CD4-positive, alpha-beta memory T cell (primary cell): ENCODE measurements at regions of chr22 and their contacts with region 1.

Region 1: DNA sequence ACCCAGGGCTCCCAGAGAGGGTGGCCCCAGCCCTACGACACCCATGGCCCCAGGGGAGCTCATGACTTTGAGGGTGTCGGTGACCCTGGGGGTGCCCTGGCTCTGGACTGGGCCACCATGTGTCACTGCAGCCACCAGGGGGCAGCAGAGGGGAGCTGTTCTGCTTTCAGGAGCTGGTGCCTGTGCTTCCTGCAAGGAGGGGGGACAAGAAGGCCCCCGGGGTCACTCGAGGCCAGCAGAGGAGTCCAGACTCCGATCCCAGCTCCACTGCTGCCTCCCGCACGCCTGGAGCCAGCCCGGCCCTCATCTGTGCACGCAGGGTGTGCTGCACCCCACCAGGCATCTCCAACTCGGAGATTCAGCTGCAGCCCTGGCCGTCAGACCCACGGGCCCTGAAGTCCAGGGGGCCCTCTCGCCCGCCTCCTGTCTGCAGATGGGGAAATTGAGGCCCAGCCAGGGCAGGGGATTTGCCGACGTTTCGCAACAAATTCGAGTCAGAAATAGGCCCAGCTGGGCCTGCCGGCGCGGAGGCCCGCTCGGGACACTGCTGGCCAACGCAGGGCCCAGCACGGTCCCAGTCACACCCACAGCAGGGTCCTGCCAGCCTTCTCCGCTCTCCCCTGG is 29.5 kb upstream of the WNT7B start:
- DNase-seq: peak; percentile 77 to 82 (median 81)
- H3K4me3 ChIP-seq: no peak overlapping the region
- H3K4me3 Mint-ChIP-seq: peak overlapping the region in 1 of 8 donors; percentile 43
- H3K27ac ChIP-seq: no peak overlapping the region
- H3K27ac Mint-ChIP-seq: peak overlapping the region in 3 of 7 donors; percentile 8 to 68 (median 22)
- H3K4me1 ChIP-seq: no peaks in the 10 kb centered on the region
- H3K4me1 Mint-ChIP-seq: peaks cover 0 to 5% (median 3%) of the 10 kb centered on the region in 4 donors
- H3K27me3 ChIP-seq: no peaks in the 10 kb centered on the region
- H3K27me3 Mint-ChIP-seq: no peaks in the 10 kb centered on the region

Region 2: GRCh38 chr22:45994491-45995404 is 11.7 kb before region 1 on chr22:
- CTCF ChIA-PET with region 1: interaction called, 52 read pairs
- POLR2A ChIA-PET with region 1: no interaction called
- intact Hi-C with region 1: no loop called
- DNase-seq: peak; percentile 56 to 71 (median 61)
- H3K4me3 ChIP-seq: no peak overlapping the region
- H3K4me3 Mint-ChIP-seq: no peak overlapping the region
- H3K27ac ChIP-seq: no peak overlapping the region
- H3K27ac Mint-ChIP-seq: no peak overlapping the region
- H3K4me1 ChIP-seq: peaks cover 5% of the 10 kb centered on the region
- H3K4me1 Mint-ChIP-seq: peaks cover 0 to 11% (median 5%) of the 10 kb centered on the region in 4 donors
- H3K27me3 ChIP-seq: no peaks in the 10 kb centered on the region
- H3K27me3 Mint-ChIP-seq: peaks cover 1 to 6% of the 10 kb centered on the region in 2 donors

Region 3: GRCh38 chr22:46019351-46019750 is 12.9 kb after region 1 on chr22:
- CTCF ChIA-PET with region 1: interaction called, 46 read pairs
- POLR2A ChIA-PET with region 1: no interaction called
- intact Hi-C with region 1: no loop called
- DNase-seq: no peak
- H3K4me3 ChIP-seq: no peak overlapping the region
- H3K4me3 Mint-ChIP-seq: no peak overlapping the region
- H3K27ac ChIP-seq: no peak overlapping the region
- H3K27ac Mint-ChIP-seq: no peak overlapping the region
- H3K4me1 ChIP-seq: peaks cover 4% of the 10 kb centered on the region
- H3K4me1 Mint-ChIP-seq: peaks cover 0 to 5% (median 1%) of the 10 kb centered on the region in 4 donors
- H3K27me3 ChIP-seq: no peaks in the 10 kb centered on the region
- H3K27me3 Mint-ChIP-seq: peaks cover 4 to 5% of the 10 kb centered on the region in 2 donors

Region 4: GRCh38 chr22:46116491-46116958 is 110.0 kb after region 1 on chr22:
- CTCF ChIA-PET with region 1: interaction called, 236 read pairs
- POLR2A ChIA-PET with region 1: interaction called, 13 read pairs
- intact Hi-C with region 1: loop called (anchors 1 kb)
- DNase-seq: peak; percentile 74 to 83 (median 77)
- H3K4me3 ChIP-seq: no peak overlapping the region
- H3K4me3 Mint-ChIP-seq: no peak overlapping the region
- H3K27ac ChIP-seq: no peak overlapping the region
- H3K27ac Mint-ChIP-seq: peak overlapping the region in 1 of 7 donors; percentile 29
- H3K4me1 ChIP-seq: peaks cover 4% of the 10 kb centered on the region
- H3K4me1 Mint-ChIP-seq: peaks cover 0 to 1% (median 0%) of the 10 kb centered on the region in 4 donors
- H3K27me3 ChIP-seq: no peaks in the 10 kb centered on the region
- H3K27me3 Mint-ChIP-seq: no peaks in the 10 kb centered on the region

Region 5: GRCh38 chr22:46309526-46310085 is 303.1 kb after region 1 on chr22:
- CTCF ChIA-PET with region 1: interaction called, 9 read pairs
- POLR2A ChIA-PET with region 1: no interaction called
- intact Hi-C with region 1: loop called (anchors 5 kb)
- DNase-seq: no peak
- H3K4me3 ChIP-seq: no peak overlapping the region
- H3K4me3 Mint-ChIP-seq: no peak overlapping the region
- H3K27ac ChIP-seq: no peak overlapping the region
- H3K27ac Mint-ChIP-seq: peak overlapping the region in 2 of 7 donors; percentile 9 to 66
- H3K4me1 ChIP-seq: no peaks in the 10 kb centered on the region
- H3K4me1 Mint-ChIP-seq: peaks cover 0 to 2% (median under 1%) of the 10 kb centered on the region in 4 donors
- H3K27me3 ChIP-seq: no peaks in the 10 kb centered on the region
- H3K27me3 Mint-ChIP-seq: no peaks in the 10 kb centered on the region

Region 6: GRCh38 chr22:46317646-46318045 is 311.2 kb after region 1 on chr22:
- CTCF ChIA-PET with region 1: interaction called, 14 read pairs
- POLR2A ChIA-PET with region 1: no interaction called
- intact Hi-C with region 1: loop called (anchors 5 kb)
- DNase-seq: no peak
- H3K4me3 ChIP-seq: no peak overlapping the region
- H3K4me3 Mint-ChIP-seq: no peak overlapping the region
- H3K27ac ChIP-seq: no peak overlapping the region
- H3K27ac Mint-ChIP-seq: peak overlapping the region in 1 of 7 donors; percentile 28
- H3K4me1 ChIP-seq: no peaks in the 10 kb centered on the region
- H3K4me1 Mint-ChIP-seq: no peaks in the 10 kb centered on the region
- H3K27me3 ChIP-seq: no peaks in the 10 kb centered on the region
- H3K27me3 Mint-ChIP-seq: no peaks in the 10 kb centered on the region